ENCODE measurements at regions of chr16 and their contacts with region 1.

Region 1: GRCh38 chr16:1420111-1420540 is 421 bp downstream of the UQCC4 start:
- DNase-seq: no peak
- ATAC-seq: peak; percentile 7
- H3K4me3 ChIP-seq: peak overlapping the region; percentile 94
- H3K27ac ChIP-seq: peak overlapping the region; percentile 98
- H3K4me1 ChIP-seq: no peaks in the 10 kb centered on the region
- H3K27me3 ChIP-seq: no peaks in the 10 kb centered on the region
- CTCF ChIP-seq: no peak
- EP300 ChIP-seq: no peak
- POLR2A ChIP-seq: no peak
- RAD21 ChIP-seq: no peak

Region 2: DNA sequence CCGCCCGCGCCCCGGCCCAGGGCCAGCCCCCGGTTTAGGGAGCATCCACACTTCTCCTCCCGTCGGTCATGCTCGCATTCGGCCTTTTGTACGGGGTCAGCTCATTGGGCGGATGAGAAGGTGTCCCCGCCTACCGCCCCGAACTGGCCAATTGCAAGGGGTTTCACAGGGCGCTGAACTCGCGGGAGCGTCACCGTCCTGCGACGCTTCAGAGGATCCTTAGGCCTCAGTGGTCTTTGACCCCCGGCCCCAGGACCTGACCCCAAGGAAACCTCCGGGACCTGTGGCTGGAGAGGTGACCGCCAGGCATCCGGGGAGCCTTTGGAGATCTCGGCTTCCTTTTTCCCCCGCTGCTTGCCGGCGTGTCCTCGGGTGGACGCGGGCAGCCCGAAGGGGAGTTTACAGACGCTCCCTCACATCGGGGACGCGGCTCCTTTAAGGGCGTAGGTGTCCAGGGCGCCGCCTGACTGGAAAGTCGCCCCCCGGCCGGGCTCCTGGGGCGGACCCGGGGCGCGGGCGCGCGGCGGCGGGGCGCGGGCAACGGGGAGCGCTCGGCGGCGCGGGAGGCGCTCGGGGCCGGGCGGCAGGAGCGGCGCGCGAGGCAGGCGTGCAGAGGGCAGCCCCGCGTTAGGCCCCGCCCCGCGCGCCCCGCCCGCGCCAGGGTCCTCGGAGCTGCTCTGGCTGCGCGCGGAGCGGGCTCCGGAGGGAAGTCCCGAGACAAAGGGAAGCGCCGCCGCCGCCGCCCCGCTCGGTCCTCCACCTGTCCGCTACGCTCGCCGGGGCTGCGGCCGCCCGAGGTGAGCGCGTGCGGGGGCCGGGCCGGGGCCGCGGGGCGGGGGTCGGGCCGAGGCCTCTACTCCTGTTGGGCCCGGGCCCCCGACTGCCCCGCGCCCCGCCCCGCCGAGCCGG is 110.9 kb before region 1 on chr16 and contains the start of gene UBE2I:
- CTCF ChIA-PET with region 1: no interaction called
- POLR2A ChIA-PET with region 1: interaction called, 7 read pairs
- RAD21 ChIA-PET with region 1: no interaction called
- SMC1A ChIA-PET with region 1: no interaction called
- in situ Hi-C with region 1: no loop called
- intact Hi-C with region 1: loop called (anchors 5 kb)
- DNase-seq: peak; percentile 96
- ATAC-seq: peak; percentile 76
- H3K4me3 ChIP-seq: peak within 1 kb of the TSS; percentile 93
- H3K27ac ChIP-seq: peak within 1 kb of the TSS; percentile 100
- H3K4me1 ChIP-seq: peaks cover 8% of the 10 kb centered on the region
- H3K27me3 ChIP-seq: no peaks in the 10 kb centered on the region
- CTCF ChIP-seq: no peak
- EP300 ChIP-seq: no peak
- POLR2A ChIP-seq: peak; percentile 87
- RAD21 ChIP-seq: no peak
- polyA plus RNA-seq, gene UBE2I: 47.5 to 51.5 TPM

Region 3: DNA sequence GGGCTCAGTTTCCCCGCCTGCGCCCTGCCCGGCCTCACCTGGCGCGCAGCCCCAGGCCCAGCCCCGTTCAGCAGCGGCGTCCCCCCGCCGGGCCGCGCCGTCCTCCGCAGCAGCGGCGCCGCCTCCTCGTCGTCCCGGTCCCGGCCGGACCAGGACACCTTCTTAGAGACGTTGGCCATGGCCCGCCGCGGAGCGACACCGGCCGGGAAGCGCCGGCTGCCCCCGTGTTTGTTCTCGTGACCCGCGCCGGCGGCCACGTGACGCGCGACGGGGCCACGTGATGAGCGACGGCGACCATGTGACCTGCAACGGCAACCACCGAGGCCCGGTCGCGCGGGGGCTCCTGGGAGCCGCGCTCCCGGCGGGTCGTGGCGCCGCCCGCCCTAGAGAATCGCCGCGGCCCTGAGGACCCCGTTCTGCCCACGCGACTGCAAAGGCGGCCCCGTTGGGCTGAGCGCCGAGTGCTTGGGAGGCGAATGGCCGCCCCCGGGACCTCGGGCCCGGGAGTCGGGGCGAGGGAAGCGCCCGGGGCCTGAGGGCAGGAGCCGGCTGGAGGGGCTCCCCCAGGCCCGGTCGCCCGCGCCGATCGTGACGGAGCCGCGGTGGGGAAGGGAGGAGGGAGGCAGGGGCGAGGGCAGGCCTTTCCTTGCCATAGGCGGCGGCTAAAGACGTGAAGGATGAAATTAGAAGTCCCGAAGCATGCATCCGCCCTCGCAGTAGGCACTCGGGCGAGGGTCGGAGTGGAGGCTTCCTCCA is 54.8 kb after region 1 on chr16 and contains the start of gene CLCN7:
- CTCF ChIA-PET with region 1: no interaction called
- POLR2A ChIA-PET with region 1: interaction called, 7 read pairs
- RAD21 ChIA-PET with region 1: interaction called, 3 read pairs
- SMC1A ChIA-PET with region 1: interaction called, 3 read pairs
- in situ Hi-C with region 1: no loop called
- intact Hi-C with region 1: loop called (anchors 5 kb)
- DNase-seq: no peak
- ATAC-seq: peak; percentile 83
- H3K4me3 ChIP-seq: peak within 1 kb of the TSS; percentile 93
- H3K27ac ChIP-seq: peak within 1 kb of the TSS; percentile 96
- H3K4me1 ChIP-seq: peaks cover 20% of the 10 kb centered on the region
- H3K27me3 ChIP-seq: no peaks in the 10 kb centered on the region
- CTCF ChIP-seq: no peak
- EP300 ChIP-seq: peak in 1 of 2 experiments; percentile 40; a peak in 1 of 4 replicates
- POLR2A ChIP-seq: peak; percentile 95
- RAD21 ChIP-seq: no peak
- polyA plus RNA-seq, gene CLCN7: 0.04 to 0.18 TPM

Region 4: GRCh38 chr16:1610276-1611017 is 190.3 kb after region 1 on chr16:
- CTCF ChIA-PET with region 1: no interaction called
- POLR2A ChIA-PET with region 1: no interaction called
- RAD21 ChIA-PET with region 1: no interaction called
- SMC1A ChIA-PET with region 1: no interaction called
- in situ Hi-C with region 1: no loop called
- intact Hi-C with region 1: loop called (anchors 5 kb)
- DNase-seq: peak; percentile 41
- ATAC-seq: peak; percentile 82
- H3K4me3 ChIP-seq: peak overlapping the region; percentile 71
- H3K27ac ChIP-seq: no peak overlapping the region
- H3K4me1 ChIP-seq: peaks cover 20% of the 10 kb centered on the region
- H3K27me3 ChIP-seq: peaks cover 0 to 4% of the 10 kb centered on the region in 2 experiments; a peak in 1 of 4 replicates
- CTCF ChIP-seq: no peak
- EP300 ChIP-seq: no peak
- POLR2A ChIP-seq: 0 out of 2 replicates have a peak, but pooled peaks have one; percentile 42
- RAD21 ChIP-seq: no peak

Region 5: DNA sequence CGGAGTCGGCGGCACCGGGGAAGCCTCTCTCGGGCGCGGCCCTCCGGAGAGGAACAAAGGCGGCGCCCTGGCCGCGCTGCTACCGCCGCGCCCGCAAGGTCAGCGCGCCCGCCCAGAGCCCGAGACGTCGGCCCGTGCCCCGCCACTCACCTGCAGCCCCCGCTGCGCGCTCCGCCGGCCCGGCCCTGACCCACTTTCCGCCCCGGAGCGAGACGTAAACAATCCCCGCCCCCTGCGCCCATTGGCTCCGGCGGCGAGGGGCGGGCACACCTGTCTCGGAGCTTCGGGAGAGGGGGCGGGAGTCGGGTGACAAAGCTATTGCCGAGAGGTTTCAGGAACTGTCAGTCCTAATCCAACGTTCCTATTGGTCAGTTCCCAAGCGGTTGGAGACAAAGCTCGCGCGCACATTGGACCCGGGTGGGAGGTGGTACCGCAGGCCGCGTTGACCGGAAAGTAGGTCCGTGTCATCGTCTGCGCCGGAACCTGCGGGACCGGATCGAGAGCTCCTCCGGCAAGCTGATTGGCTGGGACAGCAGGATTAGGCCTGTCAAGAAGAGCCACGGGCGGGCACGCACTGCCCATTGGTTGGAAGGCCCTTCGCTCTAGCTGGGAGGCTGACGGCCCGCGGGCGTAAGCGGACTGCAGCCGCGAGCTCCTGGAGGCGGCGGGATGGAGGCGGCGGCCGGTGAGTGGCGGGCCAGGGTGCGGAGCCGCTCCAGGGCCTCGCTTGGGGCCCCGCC is 362.4 kb after region 1 on chr16 and contains the starts of genes NUBP2 and SPSB3:
- CTCF ChIA-PET with region 1: no interaction called
- POLR2A ChIA-PET with region 1: no interaction called
- RAD21 ChIA-PET with region 1: interaction called, 4 read pairs
- SMC1A ChIA-PET with region 1: no interaction called
- in situ Hi-C with region 1: no loop called
- intact Hi-C with region 1: loop called (anchors 2 kb)
- DNase-seq: peak; percentile 100
- ATAC-seq: peak; percentile 96
- H3K4me3 ChIP-seq: peak within 1 kb of the TSS; percentile 94
- H3K27ac ChIP-seq: peak within 1 kb of the TSS; percentile 68
- H3K4me1 ChIP-seq: peaks cover 6% of the 10 kb centered on the region; the same call in 1 of the 2 replicates
- H3K27me3 ChIP-seq: no peaks in the 10 kb centered on the region
- CTCF ChIP-seq: no peak
- EP300 ChIP-seq: no peak
- POLR2A ChIP-seq: peak; percentile 81
- RAD21 ChIP-seq: no peak
- polyA plus RNA-seq, gene NUBP2: 1.9 to 5.9 TPM
- polyA plus RNA-seq, gene SPSB3: 0.31 to 1.5 TPM